ENCODE measurements at regions of chr9 and their contacts with region 1.

Region 1: GRCh38 chr9:21812946-21813568 is 10.6 kb downstream of the MTAP start:
- DNase-seq: peak; percentile 64
- ATAC-seq: peak; percentile 77 to 85

Region 2: GRCh38 chr9:22008736-22009562 is 195.9 kb after region 1 on chr9 and contains the start of gene CDKN2B:
- intact Hi-C with region 1: loop called in 1 of 2 experiments (anchors 10 kb)
- DNase-seq: peak; percentile 97
- ATAC-seq: peak; percentile 98 to 100
- total RNA-seq, gene CDKN2B: 3.6 to 7.9 TPM

Region 3: GRCh38 chr9:22037954-22038690 is 225.1 kb after region 1 on chr9:
- intact Hi-C with region 1: loop called (anchors 2 to 10 kb)
- DNase-seq: no peak
- ATAC-seq: no peak

Region 4: GRCh38 chr9:22238809-22239684 is 426.0 kb after region 1 on chr9:
- intact Hi-C with region 1: loop called (anchors 2 to 10 kb)
- DNase-seq: no peak
- ATAC-seq: peak in 1 of 2 donors; percentile 55

Region 5: DNA sequence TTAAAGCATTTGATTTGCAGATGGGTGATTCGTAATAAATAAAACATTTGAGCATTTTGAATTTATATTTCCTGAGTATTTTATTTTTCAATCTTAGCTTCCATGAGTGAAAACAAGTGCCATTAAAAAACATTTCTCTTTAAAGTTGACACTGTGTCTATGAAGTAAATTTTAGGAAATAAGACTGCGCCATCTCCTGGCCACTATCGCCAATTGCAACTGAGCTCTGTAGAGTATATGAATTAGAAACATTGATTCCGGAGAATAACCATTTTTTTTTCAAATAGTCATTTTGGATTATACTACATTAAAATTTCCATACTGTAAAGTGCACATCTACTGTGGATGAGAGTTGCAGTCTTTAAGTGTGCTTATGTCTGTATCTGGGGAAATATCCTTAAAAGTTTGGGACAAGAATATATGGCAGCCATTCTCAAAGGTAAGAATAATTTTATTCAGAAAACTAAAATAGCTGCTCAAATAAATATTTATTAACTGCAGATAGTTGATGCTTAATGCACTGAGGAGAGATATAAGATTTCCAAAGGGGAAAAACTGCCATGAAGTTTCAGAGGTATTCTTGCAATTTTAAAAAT is 639.5 kb after region 1 on chr9:
- intact Hi-C with region 1: loop called in 1 of 2 experiments (anchors 10 kb)
- DNase-seq: peak; percentile 33
- ATAC-seq: no peak

Measured in left cardiac atrium (tissue), 4 donors.